Posterior vena cava (tissue), 2 donors: ENCODE measurements at regions of chr17 and their contacts with region 1.

Region 1: DNA sequence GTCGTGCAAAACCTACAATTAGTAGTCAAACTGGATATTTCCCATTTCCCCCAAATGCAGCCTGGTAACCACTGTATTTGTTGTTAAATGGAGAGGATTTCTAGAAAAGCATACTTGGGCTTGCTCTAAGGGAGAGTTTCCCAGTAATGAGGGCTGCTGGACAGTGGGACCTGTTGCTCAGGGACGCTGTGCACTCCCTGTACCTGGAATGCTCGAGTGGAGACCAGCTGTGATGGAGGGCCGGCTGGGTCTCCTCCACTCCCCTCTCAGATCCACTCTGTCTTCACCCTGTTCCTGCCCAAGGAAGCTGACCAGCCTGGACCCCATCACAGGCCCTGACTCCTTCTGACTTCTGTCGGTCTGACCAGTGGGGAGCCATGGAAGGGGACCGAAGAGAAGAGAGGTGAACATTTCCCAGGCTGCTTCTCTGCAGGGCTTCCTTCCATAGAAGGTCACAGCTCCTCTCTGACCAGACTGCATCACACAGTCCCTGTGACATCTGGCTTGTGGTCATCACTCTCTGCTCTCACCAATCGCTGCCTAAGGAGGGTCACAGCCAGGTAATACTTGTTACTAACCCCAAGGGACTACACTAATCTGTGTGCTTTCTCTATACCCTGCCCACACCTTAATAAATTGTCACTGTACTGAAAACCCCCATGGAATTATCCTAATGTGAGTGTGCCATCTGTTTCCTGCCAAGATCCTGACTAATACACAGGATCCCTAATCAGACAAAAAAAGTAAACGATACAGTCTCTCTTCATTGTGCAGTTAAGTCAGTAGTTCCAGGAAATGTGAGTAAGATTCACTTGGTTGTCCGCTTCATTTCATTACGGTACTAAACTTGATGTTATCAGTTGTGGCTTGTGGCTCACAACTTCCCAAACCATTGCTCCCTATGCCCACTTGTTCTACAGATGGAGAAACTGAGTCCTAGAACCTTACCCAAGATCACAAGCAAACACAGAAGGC is 102.4 kb downstream of the CCT6B start:
- DNase-seq: peak; percentile 19

Region 2: GRCh38 chr17:33131620-33132019 is 1727.3 kb before region 1 on chr17:
- intact Hi-C with region 1: loop called in 1 of 2 experiments (anchors 5 kb)
- DNase-seq: peak; percentile 25

Region 3: GRCh38 chr17:34894964-34895363 is 36.1 kb after region 1 on chr17:
- intact Hi-C with region 1: loop called in 1 of 2 experiments (anchors 1 kb)
- DNase-seq: no peak

Region 4: DNA sequence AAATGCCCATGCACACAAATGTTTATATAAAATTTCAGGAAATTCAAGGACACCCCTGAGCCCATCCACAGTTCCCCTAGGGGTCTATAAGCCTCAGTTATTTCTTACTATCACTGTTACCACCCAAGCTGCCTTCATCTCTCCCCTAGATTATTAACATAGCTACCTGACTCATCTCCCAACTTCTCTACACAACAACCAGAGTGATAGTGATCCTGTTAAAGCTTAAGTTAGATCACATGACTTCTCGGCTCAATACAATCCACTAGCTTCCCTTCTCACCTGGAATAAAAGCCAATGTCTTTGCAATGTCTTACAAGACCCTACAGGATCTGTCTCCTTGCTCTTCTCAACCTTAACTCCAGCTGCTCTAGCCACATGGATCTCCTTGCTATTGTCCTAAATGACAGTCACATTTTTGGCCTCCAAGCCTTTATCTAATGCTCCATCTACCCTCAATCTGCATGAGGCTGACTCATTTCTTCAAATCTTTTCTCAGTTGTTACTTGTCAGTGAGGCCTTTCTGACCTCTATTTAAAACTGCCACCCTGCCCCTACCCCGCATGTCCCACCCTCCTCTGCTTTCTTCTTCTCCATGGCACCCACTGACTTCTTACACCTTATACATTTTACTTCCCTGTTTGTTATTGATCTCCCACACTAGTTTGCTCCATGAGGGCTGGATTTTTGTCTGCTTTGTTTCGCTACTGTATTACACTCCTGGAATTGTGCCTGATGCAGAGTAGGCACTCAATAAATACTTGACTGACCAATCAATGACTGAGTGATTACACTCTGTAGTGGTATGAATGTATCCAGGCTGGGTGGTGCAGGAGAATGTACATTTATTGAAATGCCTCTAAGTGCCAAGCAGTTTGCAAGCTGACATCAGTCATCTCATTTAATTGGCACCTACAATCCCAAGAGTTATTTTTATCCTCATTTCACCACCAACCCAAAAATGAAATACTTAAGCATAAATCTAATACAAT is 116.2 kb after region 1 on chr17:
- intact Hi-C with region 1: no loop called
- DNase-seq: no peak